ENCODE measurements at regions of chr3 and their contacts with region 1.

Region 1: DNA sequence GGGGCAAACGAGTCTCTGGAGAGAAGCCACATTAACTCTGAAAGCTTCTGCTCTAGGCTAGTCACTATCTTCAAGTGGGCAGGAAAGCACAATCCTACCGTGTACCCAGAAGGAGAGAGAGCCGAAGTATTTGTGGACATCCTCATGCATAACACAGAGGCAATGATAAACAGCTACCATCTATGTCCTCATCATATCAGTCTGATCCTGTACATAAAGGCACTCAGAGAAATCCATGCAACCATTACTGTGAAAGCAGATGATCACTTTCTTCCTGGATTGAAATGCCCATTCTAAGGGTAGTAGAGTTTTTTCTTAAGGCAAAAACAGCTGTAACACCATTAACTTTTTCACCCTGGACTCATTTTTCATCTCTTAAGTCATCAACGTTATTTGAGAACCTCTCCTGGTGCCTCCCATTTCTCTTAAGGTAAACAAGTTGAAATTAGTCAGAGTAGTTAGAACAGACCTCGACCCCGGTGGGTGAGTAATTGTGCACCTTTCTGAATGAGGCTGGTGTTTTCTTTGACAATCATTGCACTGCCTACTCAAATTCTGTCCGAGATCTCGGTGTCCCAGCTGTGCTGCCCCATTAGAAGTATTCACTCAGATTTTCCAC is 327.4 kb downstream of the SHQ1 start:
- DNase-seq: peak; percentile 35 to 75
- H3K4me3 ChIP-seq: no peak overlapping the region
- H3K27ac ChIP-seq: no peak overlapping the region
- H3K4me1 ChIP-seq: peaks cover 16% of the 10 kb centered on the region
- H3K27me3 ChIP-seq: no peaks in the 10 kb centered on the region
- CTCF ChIP-seq: no peak

Region 2: DNA sequence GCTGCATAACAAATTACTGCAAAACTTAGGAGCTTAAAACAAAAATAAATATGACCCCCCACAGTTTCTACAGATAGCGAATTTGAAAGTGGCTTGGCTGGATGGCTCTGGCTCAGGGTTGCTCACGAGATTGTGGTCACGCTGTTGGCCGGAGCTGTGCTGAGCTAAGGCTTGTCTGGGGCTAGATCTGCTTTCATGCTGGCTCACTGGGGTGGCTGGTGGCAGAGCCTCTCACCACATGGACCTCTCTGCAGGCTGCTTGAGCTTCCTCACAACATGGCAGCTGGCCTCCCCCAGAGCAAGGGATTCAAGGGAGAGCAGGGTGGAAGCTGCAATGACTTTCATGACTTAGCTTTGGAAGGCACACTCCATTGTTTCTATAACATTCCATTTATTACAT is 26.7 kb before region 1 on chr3:
- CTCF ChIA-PET with region 1: interaction called, 13 read pairs
- POLR2A ChIA-PET with region 1: no interaction called
- intact Hi-C with region 1: no loop called
- DNase-seq: no peak
- H3K4me3 ChIP-seq: no peak overlapping the region
- H3K27ac ChIP-seq: no peak overlapping the region
- H3K4me1 ChIP-seq: no peaks in the 10 kb centered on the region
- H3K27me3 ChIP-seq: no peaks in the 10 kb centered on the region
- CTCF ChIP-seq: no peak